CD4-positive, alpha-beta T cell (primary cell): ENCODE measurements at regions of chr6 and their contacts with region 1.

Region 1: DNA sequence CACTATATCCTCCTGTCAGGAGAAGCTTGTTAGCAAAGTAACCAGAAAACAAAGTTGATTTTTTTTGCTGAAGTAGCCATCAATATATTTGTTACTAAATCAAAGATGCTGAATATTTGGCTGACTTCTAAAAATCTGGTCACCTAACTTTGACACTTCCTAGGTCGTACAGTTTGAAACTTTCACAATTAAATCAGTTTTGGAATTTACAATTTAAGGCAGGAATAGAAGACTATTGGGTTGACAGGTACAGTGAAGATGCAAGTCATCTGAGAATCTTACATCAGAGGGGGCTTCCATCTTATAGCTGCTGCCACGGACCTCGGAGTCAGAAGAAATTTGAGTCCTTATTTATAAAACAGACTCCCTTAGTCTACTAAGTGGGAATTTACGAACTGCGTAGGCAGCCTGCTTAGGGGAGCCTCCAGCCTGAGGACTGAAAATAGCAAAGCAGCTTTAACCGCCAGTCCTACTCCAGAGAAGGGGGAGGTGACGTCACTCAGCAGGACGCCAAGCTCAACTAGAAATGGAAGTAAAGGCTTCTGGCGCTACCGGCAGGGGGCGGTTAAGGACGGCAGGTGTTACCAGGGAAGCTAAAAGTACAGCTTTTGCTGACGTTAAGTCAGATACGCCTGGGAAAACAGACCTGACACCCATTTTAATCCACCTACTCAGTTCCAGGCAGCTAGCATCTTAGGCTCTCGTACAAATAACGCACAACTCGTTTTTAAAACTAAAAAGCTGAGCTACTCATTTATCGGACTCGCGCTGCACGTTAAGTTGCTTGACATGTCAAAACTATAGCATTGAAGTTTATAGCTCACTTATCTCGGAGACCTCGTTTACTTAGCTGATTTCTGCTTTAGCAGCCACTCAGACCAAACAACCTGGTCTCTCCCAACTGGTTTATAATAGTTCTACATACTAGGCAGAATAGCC is 61.1 kb upstream of the HFE start:
- DNase-seq: peak; percentile 75 to 98 (median 88)
- ATAC-seq: peak; percentile 45
- H3K4me3 ChIP-seq: peak overlapping the region; percentile 70
- H3K4me3 Mint-ChIP-seq: peak overlapping the region; percentile 90
- H3K27ac ChIP-seq: peak overlapping the region; percentile 86 to 88
- H3K27ac Mint-ChIP-seq: peak overlapping the region; percentile 97
- H3K4me1 ChIP-seq: peaks cover 34% of the 10 kb centered on the region
- H3K4me1 Mint-ChIP-seq: peaks cover 42% of the 10 kb centered on the region
- H3K27me3 ChIP-seq: no peaks in the 10 kb centered on the region
- H3K27me3 Mint-ChIP-seq: no peaks in the 10 kb centered on the region
- CTCF ChIP-seq: peak; percentile 86

Region 2: GRCh38 chr6:25449774-25450173 is 576.4 kb before region 1 on chr6:
- CTCF ChIA-PET with region 1: no interaction called
- POLR2A ChIA-PET with region 1: no interaction called
- intact Hi-C with region 1: no loop called
- DNase-seq: no peak
- ATAC-seq: no peak
- H3K4me3 ChIP-seq: no peak overlapping the region
- H3K4me3 Mint-ChIP-seq: no peak overlapping the region
- H3K27ac ChIP-seq: no peak overlapping the region
- H3K27ac Mint-ChIP-seq: no peak overlapping the region
- H3K4me1 ChIP-seq: no peaks in the 10 kb centered on the region
- H3K4me1 Mint-ChIP-seq: peaks cover 18% of the 10 kb centered on the region
- H3K27me3 ChIP-seq: no peaks in the 10 kb centered on the region
- H3K27me3 Mint-ChIP-seq: no peaks in the 10 kb centered on the region
- CTCF ChIP-seq: no peak

Region 3: DNA sequence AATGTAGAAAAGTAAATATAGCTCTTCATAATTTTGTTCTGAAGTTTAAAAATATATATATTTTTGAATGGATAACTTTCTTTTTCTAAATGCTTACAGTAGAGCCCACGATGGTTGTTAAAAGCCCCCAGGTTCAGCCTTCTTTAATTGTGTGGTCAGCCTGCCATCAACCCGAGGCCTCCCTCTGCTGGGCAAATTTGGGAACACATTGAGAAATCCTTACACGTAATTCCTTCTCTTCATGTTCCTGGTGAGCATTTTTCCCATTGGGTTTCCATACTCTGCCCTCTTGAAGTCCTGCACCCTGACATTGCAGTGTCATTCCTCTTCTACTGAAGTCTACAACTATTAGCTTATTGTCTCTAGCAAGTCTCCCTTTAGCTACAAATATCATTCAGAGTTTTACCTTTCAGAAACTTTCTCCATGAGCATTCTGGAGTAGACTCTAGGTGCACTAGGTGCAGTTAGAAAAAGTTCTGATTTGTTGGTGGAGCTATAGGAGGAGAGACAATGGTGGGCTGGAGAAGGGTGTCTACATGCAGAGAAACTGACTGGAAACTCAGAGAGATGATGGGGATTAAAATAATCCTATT is 23.0 kb before region 1 on chr6:
- CTCF ChIA-PET with region 1: interaction called, 8 read pairs
- POLR2A ChIA-PET with region 1: interaction called, 26 read pairs
- intact Hi-C with region 1: no loop called
- DNase-seq: peak in 13 of 14 experiments; percentile 18 to 70 (median 38)
- ATAC-seq: peak; percentile 58
- H3K4me3 ChIP-seq: no peak overlapping the region
- H3K4me3 Mint-ChIP-seq: no peak overlapping the region
- H3K27ac ChIP-seq: no peak overlapping the region
- H3K27ac Mint-ChIP-seq: no peak overlapping the region
- H3K4me1 ChIP-seq: no peaks in the 10 kb centered on the region
- H3K4me1 Mint-ChIP-seq: peaks cover 10% of the 10 kb centered on the region
- H3K27me3 ChIP-seq: no peaks in the 10 kb centered on the region
- H3K27me3 Mint-ChIP-seq: no peaks in the 10 kb centered on the region
- CTCF ChIP-seq: peak; percentile 90

Region 4: GRCh38 chr6:26087284-26088115 is 61.3 kb after region 1 on chr6 and contains the start of gene HFE:
- CTCF ChIA-PET with region 1: interaction called, 11 read pairs
- POLR2A ChIA-PET with region 1: interaction called, 26 read pairs
- intact Hi-C with region 1: no loop called
- DNase-seq: peak in 11 of 14 experiments; percentile 3 to 57 (median 21)
- ATAC-seq: peak; percentile 25
- H3K4me3 ChIP-seq: peak within 1 kb of the TSS; percentile 86
- H3K4me3 Mint-ChIP-seq: peak within 1 kb of the TSS; percentile 87
- H3K27ac ChIP-seq: peak within 1 kb of the TSS; percentile 23 to 61
- H3K27ac Mint-ChIP-seq: peak within 1 kb of the TSS; percentile 71
- H3K4me1 ChIP-seq: peaks cover 33% of the 10 kb centered on the region
- H3K4me1 Mint-ChIP-seq: peaks cover 34% of the 10 kb centered on the region
- H3K27me3 ChIP-seq: no peaks in the 10 kb centered on the region
- H3K27me3 Mint-ChIP-seq: no peaks in the 10 kb centered on the region
- CTCF ChIP-seq: no peak
- total RNA-seq, gene HFE: 0.08 to 0.28 TPM

Region 5: GRCh38 chr6:26140254-26140966 is 114.2 kb after region 1 on chr6:
- CTCF ChIA-PET with region 1: no interaction called
- POLR2A ChIA-PET with region 1: no interaction called
- intact Hi-C with region 1: no loop called
- DNase-seq: no peak
- ATAC-seq: no peak
- H3K4me3 ChIP-seq: no peak overlapping the region
- H3K4me3 Mint-ChIP-seq: no peak overlapping the region
- H3K27ac ChIP-seq: no peak overlapping the region
- H3K27ac Mint-ChIP-seq: no peak overlapping the region
- H3K4me1 ChIP-seq: no peaks in the 10 kb centered on the region
- H3K4me1 Mint-ChIP-seq: peaks cover 12% of the 10 kb centered on the region
- H3K27me3 ChIP-seq: no peaks in the 10 kb centered on the region
- H3K27me3 Mint-ChIP-seq: no peaks in the 10 kb centered on the region
- CTCF ChIP-seq: no peak

Region 6: DNA sequence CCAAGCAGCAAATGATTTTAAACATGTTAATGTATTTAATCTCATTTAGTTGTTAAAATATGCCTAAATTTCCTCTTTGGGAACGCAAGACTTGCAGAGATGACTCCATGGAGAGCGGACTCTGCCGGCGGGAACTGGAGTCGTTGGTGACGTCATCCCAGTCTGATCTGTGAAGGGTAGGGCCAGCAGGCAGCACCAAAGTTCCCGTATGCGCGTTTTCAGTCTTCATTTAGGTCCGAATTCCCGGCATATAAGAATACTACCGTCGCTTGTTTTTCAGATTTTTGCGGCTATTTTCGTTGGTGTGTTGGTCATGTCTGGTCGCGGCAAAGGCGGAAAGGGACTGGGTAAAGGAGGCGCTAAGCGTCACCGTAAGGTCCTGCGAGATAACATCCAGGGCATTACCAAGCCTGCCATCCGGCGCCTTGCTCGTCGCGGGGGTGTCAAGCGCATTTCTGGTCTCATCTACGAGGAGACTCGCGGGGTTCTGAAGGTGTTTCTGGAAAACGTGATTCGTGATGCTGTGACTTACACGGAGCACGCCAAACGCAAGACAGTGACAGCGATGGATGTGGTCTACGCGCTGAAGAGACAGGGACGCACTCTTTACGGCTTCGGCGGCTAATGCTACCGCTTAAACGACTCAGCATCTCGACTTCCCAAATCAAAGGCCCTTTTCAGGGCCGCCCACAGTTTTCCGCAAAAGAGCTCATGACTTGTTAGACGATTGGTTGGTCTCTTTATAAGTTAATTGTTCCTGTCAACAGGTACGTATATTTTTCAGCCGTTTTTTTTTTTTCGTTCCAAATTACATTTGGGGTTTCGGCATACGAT is 178.4 kb after region 1 on chr6:
- CTCF ChIA-PET with region 1: no interaction called
- POLR2A ChIA-PET with region 1: interaction called, 101 read pairs
- intact Hi-C with region 1: loop called (anchors 5 kb)
- DNase-seq: peak; percentile 73 to 98 (median 80)
- ATAC-seq: peak; percentile 69
- H3K4me3 ChIP-seq: peak overlapping the region; percentile 68
- H3K4me3 Mint-ChIP-seq: no peak overlapping the region
- H3K27ac ChIP-seq: peak overlapping the region; percentile 89 to 90
- H3K27ac Mint-ChIP-seq: no peak overlapping the region
- H3K4me1 ChIP-seq: peaks cover 34% of the 10 kb centered on the region
- H3K4me1 Mint-ChIP-seq: peaks cover 8% of the 10 kb centered on the region
- H3K27me3 ChIP-seq: no peaks in the 10 kb centered on the region
- H3K27me3 Mint-ChIP-seq: no peaks in the 10 kb centered on the region
- CTCF ChIP-seq: peak; percentile 32

Region 7: GRCh38 chr6:27132532-27133280 is 1106.5 kb after region 1 on chr6:
- CTCF ChIA-PET with region 1: no interaction called
- POLR2A ChIA-PET with region 1: interaction called, 23 read pairs
- intact Hi-C with region 1: loop called (anchors 5 to 10 kb)
- DNase-seq: peak; percentile 80 to 99 (median 88)
- ATAC-seq: peak; percentile 79
- H3K4me3 ChIP-seq: peak overlapping the region; percentile 75
- H3K4me3 Mint-ChIP-seq: no peak overlapping the region
- H3K27ac ChIP-seq: peak overlapping the region; percentile 79 to 81
- H3K27ac Mint-ChIP-seq: no peak overlapping the region
- H3K4me1 ChIP-seq: peaks cover 31% of the 10 kb centered on the region
- H3K4me1 Mint-ChIP-seq: peaks cover 12% of the 10 kb centered on the region
- H3K27me3 ChIP-seq: no peaks in the 10 kb centered on the region
- H3K27me3 Mint-ChIP-seq: no peaks in the 10 kb centered on the region
- CTCF ChIP-seq: no peak

Region 8: DNA sequence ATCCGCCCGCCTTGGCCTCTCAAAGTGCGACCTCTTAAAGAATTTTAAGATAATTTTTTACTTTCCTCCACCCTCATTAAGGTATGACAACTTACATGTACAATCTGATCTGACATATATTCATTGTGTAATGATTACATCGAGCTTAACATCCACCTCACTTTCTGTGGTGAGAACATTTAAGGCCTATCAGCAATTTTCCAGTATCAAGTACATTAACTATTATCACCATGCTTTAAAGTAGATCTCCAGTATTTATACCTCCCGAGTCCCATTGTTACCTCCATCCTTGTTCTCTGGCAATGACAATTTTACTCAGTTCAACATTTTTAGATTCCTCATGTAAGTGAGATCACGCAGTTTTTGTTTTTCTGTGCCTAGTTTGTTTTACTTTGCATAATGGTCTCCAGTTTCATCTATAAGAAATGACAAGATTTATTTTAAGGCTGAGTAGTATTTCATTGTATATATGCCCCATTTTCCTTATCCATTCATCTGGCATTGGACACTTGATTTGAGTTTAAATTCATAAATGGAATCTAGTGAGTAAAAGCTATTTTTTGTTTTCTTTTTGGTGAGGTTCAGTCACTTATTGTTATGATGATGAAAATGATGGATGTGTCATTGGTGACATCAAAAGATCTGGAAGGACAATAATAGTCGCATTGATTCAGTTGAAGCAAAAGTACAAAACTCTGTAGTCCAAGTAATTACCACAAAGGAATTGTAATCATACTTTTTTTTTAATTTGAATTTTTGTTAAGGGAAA is 1799.0 kb after region 1 on chr6:
- CTCF ChIA-PET with region 1: no interaction called
- POLR2A ChIA-PET with region 1: interaction called, 13 read pairs
- intact Hi-C with region 1: no loop called
- DNase-seq: peak in 2 of 14 experiments; percentile 27 to 38
- ATAC-seq: no peak
- H3K4me3 ChIP-seq: peak overlapping the region; percentile 82
- H3K4me3 Mint-ChIP-seq: peak overlapping the region; percentile 90
- H3K27ac ChIP-seq: peak overlapping the region; percentile 77 to 87
- H3K27ac Mint-ChIP-seq: peak overlapping the region; percentile 99
- H3K4me1 ChIP-seq: peaks cover 8% of the 10 kb centered on the region
- H3K4me1 Mint-ChIP-seq: peaks cover 38% of the 10 kb centered on the region
- H3K27me3 ChIP-seq: no peaks in the 10 kb centered on the region
- H3K27me3 Mint-ChIP-seq: no peaks in the 10 kb centered on the region
- CTCF ChIP-seq: no peak